Naive thymus-derived CD8-positive, alpha-beta T cell (primary cell): ENCODE measurements at regions of chr1 and their contacts with region 1.

Region 1: GRCh38 chr1:145845514-145846161 is at the start of gene NUDT17:
- DNase-seq: peak; percentile 53 to 87 (median 74)
- ATAC-seq: peak; percentile 83 to 84
- H3K4me3 Mint-ChIP-seq: peak within 1 kb of the TSS in 1 of 10 donors; percentile 22
- H3K27ac Mint-ChIP-seq: peak within 1 kb of the TSS in 6 of 10 donors; percentile 71 to 87 (median 76)
- H3K4me1 Mint-ChIP-seq: peaks cover 9 to 14% (median 13%) of the 10 kb centered on the region in 4 donors
- H3K27me3 Mint-ChIP-seq: no peaks in the 10 kb centered on the region
- polyA plus RNA-seq, gene NUDT17: 2.0 to 3.9 (median 3.4) TPM

Region 2: DNA sequence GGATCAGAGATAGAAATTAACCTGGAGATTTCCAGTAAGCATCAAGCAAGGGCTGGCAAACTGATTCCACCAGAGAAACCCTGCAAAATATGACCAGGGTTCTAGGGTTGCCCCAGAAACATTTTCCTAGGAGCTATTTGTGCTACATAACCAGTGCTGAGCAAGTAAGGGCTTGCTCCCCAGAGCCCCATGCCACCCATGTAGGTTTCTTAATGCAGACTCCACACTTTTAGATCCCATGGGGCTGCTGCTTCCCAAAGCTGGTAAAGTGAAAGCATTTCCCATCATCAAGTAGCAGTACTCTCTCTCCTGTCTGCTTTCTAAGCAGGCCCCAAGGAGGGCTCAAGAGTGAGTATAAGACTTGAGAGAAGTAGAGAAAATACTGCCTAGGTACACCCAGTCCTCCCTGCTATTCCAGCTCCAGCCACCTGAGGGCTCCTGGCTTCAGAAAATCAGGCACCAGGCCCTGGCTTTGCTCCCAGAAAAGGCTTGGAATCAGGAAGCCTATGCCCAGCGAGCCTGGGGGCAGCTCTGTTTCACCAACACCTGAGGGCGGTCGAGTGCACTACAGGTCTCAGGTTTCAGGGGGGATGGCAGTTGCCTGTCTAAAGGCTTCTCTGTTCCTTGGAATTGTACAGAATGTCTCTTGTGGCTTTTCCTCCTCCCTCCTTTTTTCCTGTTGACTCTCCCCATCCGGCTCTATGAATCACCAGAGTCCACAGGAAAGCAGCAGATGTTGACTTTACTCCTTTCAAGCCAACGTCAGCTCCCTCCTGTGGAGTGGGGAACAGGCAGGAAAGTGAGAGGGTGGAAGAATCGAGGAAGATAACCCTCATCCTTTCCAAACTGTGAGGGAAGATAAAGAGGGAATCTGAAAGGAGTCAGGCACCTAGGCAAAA is 46.2 kb after region 1 on chr1:
- POLR2A ChIA-PET with region 1: no interaction called
- DNase-seq: peak; percentile 9 to 73 (median 36)
- ATAC-seq: peak; percentile 61 to 75
- H3K4me3 Mint-ChIP-seq: no peak overlapping the region
- H3K27ac Mint-ChIP-seq: peak overlapping the region in 1 of 10 donors; percentile 37
- H3K4me1 Mint-ChIP-seq: peaks cover 0 to 1% (median under 1%) of the 10 kb centered on the region in 4 donors
- H3K27me3 Mint-ChIP-seq: no peaks in the 10 kb centered on the region

Region 3: DNA sequence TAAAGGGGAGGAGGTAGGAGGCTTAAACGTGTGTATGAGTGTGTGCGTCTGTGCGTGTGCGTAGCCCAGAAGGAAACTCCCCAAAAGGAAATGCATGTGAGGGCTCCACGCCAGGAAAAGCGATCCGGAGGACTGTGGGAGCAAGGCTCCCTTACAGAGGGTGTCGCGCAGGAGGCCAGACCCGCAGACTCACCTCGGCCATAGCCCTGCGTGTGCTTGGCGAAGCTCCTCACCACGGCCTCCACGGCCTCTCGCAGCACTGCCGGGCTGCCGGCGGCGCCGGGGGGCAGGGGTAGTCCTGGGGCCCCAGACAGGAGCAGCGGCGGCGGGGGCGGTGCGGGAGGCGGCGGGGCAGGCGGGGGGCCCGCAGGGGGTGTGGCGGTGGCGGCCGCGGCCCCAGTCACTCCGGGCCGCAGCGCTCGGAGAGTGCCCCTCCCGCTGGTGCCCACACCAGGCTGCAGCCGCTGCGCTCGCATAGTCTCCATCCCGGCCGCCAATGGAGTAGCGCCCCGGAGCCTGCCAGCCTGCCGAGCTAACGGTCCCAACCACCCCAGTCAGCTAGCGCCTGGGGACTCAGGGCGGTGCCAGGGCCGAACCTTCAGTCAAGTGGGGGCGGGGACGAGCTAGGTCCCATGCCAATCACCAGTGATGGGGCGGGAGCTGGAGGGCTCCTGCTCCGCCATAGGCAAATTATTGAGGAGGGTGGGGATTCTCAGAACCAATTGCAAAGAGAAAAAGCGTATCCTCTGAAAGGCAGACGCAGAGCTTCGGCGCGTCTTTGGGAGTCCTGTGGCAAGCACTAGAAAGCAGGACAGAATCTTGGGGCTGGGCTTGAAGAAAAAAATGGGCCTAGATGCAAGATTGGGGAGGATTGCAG is 112.0 kb after region 1 on chr1 and contains the start of gene LIX1L:
- POLR2A ChIA-PET with region 1: interaction called, 11 read pairs
- DNase-seq: peak; percentile 88 to 97 (median 94)
- ATAC-seq: peak; percentile 83 to 86
- H3K4me3 Mint-ChIP-seq: peak within 1 kb of the TSS; percentile 88 to 99 (median 94)
- H3K27ac Mint-ChIP-seq: peak within 1 kb of the TSS; percentile 87 to 99 (median 98)
- H3K4me1 Mint-ChIP-seq: peaks cover 42 to 85% (median 73%) of the 10 kb centered on the region in 4 donors
- H3K27me3 Mint-ChIP-seq: no peaks in the 10 kb centered on the region
- polyA plus RNA-seq, gene LIX1L: 26.3 to 31.7 (median 29.3) TPM

Region 4: GRCh38 chr1:145996433-145997015 is 150.9 kb after region 1 on chr1 and contains the start of gene TXNIP:
- POLR2A ChIA-PET with region 1: interaction called, 11 read pairs
- DNase-seq: peak; percentile 88 to 98 (median 91)
- ATAC-seq: peak; percentile 67 to 85
- H3K4me3 Mint-ChIP-seq: peak within 1 kb of the TSS; percentile 91 to 100 (median 99)
- H3K27ac Mint-ChIP-seq: peak within 1 kb of the TSS; percentile 95 to 100 (median 99)
- H3K4me1 Mint-ChIP-seq: peaks cover 31 to 72% (median 51%) of the 10 kb centered on the region in 4 donors
- H3K27me3 Mint-ChIP-seq: no peaks in the 10 kb centered on the region
- polyA plus RNA-seq, gene TXNIP: 4,009 to 5,114 (median 5,016) TPM

Region 5: DNA sequence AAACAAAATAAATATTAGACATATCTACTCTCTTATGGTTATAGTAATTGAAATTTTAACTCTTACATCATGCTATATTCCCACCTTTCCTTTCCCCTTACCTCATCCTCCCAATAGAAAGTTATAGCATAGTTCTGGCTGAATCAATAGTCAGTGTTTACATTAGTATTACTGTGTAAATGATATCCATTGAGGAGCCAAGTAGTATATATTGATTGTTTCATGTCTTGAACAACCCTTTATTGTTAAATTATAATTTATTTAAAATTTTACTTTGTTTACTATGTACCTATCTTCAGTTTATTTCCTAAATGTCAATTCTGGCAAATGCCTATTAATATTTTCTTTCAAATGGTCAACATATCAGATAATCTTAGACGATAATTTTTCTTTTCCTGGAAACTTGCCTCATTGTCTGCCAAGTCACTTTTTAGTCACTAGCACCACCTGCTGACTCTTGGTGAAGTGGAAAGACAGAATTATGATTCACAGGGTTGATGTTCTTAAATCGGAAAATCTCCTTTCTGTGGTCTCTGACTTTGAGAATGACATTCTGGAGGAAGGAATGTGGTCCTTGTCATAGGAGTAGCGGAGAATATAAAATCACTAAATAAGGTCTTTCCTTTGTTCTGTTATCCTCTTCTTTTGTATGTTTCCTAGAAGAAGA is 167.2 kb after region 1 on chr1:
- POLR2A ChIA-PET with region 1: interaction called, 10 read pairs
- DNase-seq: peak in 9 of 10 donors; percentile 37 to 79 (median 66)
- ATAC-seq: peak; percentile 67 to 84
- H3K4me3 Mint-ChIP-seq: no peak overlapping the region
- H3K27ac Mint-ChIP-seq: no peak overlapping the region
- H3K4me1 Mint-ChIP-seq: peaks cover 1 to 12% (median 9%) of the 10 kb centered on the region in 4 donors
- H3K27me3 Mint-ChIP-seq: peaks cover 0 to 16% (median 2%) of the 10 kb centered on the region in 5 donors